ENCODE measurements at regions of chr3 and their contacts with region 1.

Region 1: GRCh38 chr3:186946756-186947375 is 16.5 kb downstream of the ST6GAL1 start:
- DNase-seq: peak; percentile 84
- H3K4me3 ChIP-seq: peak overlapping the region; percentile 44
- H3K27ac ChIP-seq: peak overlapping the region; percentile 82
- H3K4me1 ChIP-seq: peaks cover 60% of the 10 kb centered on the region
- CTCF ChIP-seq: no peak

Region 2: DNA sequence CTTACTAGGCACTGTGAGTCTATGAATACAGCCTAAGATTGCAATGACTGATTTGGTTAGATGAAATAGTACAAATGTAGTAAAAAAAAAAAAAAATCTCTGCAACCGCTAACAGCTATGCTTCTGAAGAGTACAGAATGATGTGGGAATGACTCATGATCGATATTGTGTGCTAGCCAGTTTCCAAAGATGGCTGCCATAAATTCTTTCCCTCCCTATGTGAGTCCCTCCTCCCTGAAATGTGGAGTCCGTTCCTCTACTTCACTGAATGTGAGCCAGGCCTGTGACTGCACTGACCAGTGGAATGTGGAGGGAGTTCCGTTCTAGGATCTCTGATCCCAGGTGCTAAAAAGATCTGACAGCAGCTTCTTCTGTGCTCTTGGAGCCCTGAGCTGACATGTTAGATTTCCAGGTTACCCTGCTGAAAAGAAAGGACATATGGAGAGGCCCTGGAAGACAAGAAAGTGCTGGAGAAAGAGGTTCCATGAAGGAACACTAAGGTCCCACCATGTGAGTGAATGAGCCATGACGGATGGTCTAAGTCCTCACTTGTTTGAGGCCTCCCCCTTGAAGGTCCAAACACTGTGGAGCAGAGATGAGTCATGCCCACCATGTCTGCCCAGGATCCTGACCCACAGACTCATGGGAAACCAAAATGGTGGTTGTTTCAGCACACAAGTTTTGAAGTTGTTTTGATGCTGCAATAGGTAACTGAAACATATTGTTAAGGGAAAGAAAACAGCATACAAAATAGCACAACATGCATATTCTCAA is 631.1 kb before region 1 on chr3:
- CTCF ChIA-PET with region 1: no interaction called
- POLR2A ChIA-PET with region 1: no interaction called
- intact Hi-C with region 1: no loop called
- DNase-seq: no peak
- H3K4me3 ChIP-seq: no peak overlapping the region
- H3K27ac ChIP-seq: no peak overlapping the region
- H3K4me1 ChIP-seq: no peaks in the 10 kb centered on the region
- CTCF ChIP-seq: no peak

Region 3: DNA sequence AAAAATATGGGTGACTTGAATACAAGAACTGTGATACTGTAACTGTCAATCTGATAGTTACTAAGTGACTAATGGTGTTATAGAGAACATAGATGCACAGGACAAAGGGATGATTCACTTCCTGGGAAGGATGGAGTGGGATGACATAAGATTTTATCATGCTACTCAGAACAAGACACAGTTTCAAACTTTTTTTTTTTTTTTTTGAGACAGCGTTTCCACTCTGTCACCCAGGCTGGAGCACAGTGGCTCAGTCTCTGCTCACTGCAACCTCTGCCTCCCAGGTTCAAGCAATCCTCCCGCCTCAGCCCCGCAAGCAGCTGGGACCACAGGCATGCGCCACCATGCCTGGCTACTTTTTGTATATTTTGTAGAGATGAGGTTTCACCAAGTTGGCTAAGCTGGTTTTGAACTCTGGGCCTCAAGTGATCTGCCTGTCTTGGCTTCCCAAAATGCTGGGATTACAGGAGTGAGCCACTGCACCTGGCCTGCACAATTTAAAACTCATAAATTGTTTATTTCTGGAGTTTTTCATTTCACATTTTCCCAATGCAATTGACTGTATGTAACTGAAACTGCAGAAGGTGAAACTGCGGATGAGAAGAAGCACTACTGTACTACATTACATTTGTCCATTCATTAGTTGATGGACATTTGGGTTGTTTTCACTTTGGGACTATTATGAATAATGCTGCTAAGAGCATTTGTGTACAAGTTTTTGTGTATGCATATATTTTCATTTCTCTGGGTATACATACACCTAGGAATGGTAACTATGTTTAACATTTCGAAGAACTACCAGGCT is 63.8 kb before region 1 on chr3:
- CTCF ChIA-PET with region 1: no interaction called
- POLR2A ChIA-PET with region 1: no interaction called
- intact Hi-C with region 1: no loop called
- DNase-seq: no peak
- H3K4me3 ChIP-seq: no peak overlapping the region
- H3K27ac ChIP-seq: no peak overlapping the region
- H3K4me1 ChIP-seq: no peaks in the 10 kb centered on the region
- CTCF ChIP-seq: no peak

Region 4: GRCh38 chr3:186959029-186959624 is 12.3 kb after region 1 on chr3:
- CTCF ChIA-PET with region 1: interaction called, 4 read pairs
- POLR2A ChIA-PET with region 1: interaction called, 23 read pairs
- intact Hi-C with region 1: no loop called
- DNase-seq: peak; percentile 57
- H3K4me3 ChIP-seq: peak overlapping the region; percentile 0
- H3K27ac ChIP-seq: peak overlapping the region; percentile 51
- H3K4me1 ChIP-seq: peaks cover 37% of the 10 kb centered on the region
- CTCF ChIP-seq: no peak

Region 5: GRCh38 chr3:186994000-186994955 is 47.4 kb after region 1 on chr3:
- CTCF ChIA-PET with region 1: interaction called, 4 read pairs
- POLR2A ChIA-PET with region 1: interaction called, 10 read pairs
- intact Hi-C with region 1: loop called (anchors 2 kb)
- DNase-seq: peak; percentile 82
- H3K4me3 ChIP-seq: peak overlapping the region; percentile 35
- H3K27ac ChIP-seq: peak overlapping the region; percentile 98
- H3K4me1 ChIP-seq: peaks cover 79% of the 10 kb centered on the region
- CTCF ChIP-seq: no peak

Region 6: GRCh38 chr3:187000711-187001151 is 53.9 kb after region 1 on chr3:
- CTCF ChIA-PET with region 1: no interaction called
- POLR2A ChIA-PET with region 1: interaction called, 9 read pairs
- intact Hi-C with region 1: loop called (anchors 2 kb)
- DNase-seq: peak; percentile 92
- H3K4me3 ChIP-seq: peak overlapping the region; percentile 77
- H3K27ac ChIP-seq: peak overlapping the region; percentile 98
- H3K4me1 ChIP-seq: peaks cover 72% of the 10 kb centered on the region
- CTCF ChIP-seq: no peak